CD4-positive, alpha-beta T cell (primary cell): ENCODE measurements at regions of chr14 and their contacts with region 1.

Region 1: GRCh38 chr14:22986508-22987054 is 4.2 kb upstream of the AJUBA start:
- DNase-seq: peak; percentile 81 to 96 (median 88)
- ATAC-seq: peak; percentile 67
- H3K4me3 ChIP-seq: no peak overlapping the region
- H3K4me3 Mint-ChIP-seq: peak overlapping the region; percentile 3
- H3K27ac ChIP-seq: no peak overlapping the region
- H3K27ac Mint-ChIP-seq: no peak overlapping the region
- H3K4me1 ChIP-seq: peaks cover 17% of the 10 kb centered on the region
- H3K4me1 Mint-ChIP-seq: peaks cover 3% of the 10 kb centered on the region
- H3K27me3 ChIP-seq: peaks cover 0 to 5% of the 10 kb centered on the region in 2 experiments
- H3K27me3 Mint-ChIP-seq: no peaks in the 10 kb centered on the region
- CTCF ChIP-seq: peak; percentile 95

Region 2: GRCh38 chr14:22761734-22762133 is 224.8 kb before region 1 on chr14:
- CTCF ChIA-PET with region 1: no interaction called
- POLR2A ChIA-PET with region 1: no interaction called
- intact Hi-C with region 1: no loop called
- DNase-seq: no peak
- ATAC-seq: no peak
- H3K4me3 ChIP-seq: no peak overlapping the region
- H3K4me3 Mint-ChIP-seq: no peak overlapping the region
- H3K27ac ChIP-seq: no peak overlapping the region
- H3K27ac Mint-ChIP-seq: no peak overlapping the region
- H3K4me1 ChIP-seq: peaks cover 10% of the 10 kb centered on the region
- H3K4me1 Mint-ChIP-seq: peaks cover 8% of the 10 kb centered on the region
- H3K27me3 ChIP-seq: no peaks in the 10 kb centered on the region
- H3K27me3 Mint-ChIP-seq: no peaks in the 10 kb centered on the region
- CTCF ChIP-seq: no peak

Region 3: GRCh38 chr14:22822571-22823098 is 163.9 kb before region 1 on chr14:
- CTCF ChIA-PET with region 1: interaction called, 5 read pairs
- POLR2A ChIA-PET with region 1: interaction called, 3 read pairs
- intact Hi-C with region 1: loop called (anchors 1 to 2 kb)
- DNase-seq: peak; percentile 46 to 85 (median 64)
- ATAC-seq: peak; percentile 84
- H3K4me3 ChIP-seq: peak overlapping the region; percentile 44
- H3K4me3 Mint-ChIP-seq: peak overlapping the region; percentile 2
- H3K27ac ChIP-seq: no peak overlapping the region
- H3K27ac Mint-ChIP-seq: no peak overlapping the region
- H3K4me1 ChIP-seq: peaks cover 18% of the 10 kb centered on the region
- H3K4me1 Mint-ChIP-seq: peaks cover 23% of the 10 kb centered on the region
- H3K27me3 ChIP-seq: peaks cover 0 to 5% of the 10 kb centered on the region in 2 experiments
- H3K27me3 Mint-ChIP-seq: peaks cover 10% of the 10 kb centered on the region
- CTCF ChIP-seq: peak; percentile 83

Region 4: DNA sequence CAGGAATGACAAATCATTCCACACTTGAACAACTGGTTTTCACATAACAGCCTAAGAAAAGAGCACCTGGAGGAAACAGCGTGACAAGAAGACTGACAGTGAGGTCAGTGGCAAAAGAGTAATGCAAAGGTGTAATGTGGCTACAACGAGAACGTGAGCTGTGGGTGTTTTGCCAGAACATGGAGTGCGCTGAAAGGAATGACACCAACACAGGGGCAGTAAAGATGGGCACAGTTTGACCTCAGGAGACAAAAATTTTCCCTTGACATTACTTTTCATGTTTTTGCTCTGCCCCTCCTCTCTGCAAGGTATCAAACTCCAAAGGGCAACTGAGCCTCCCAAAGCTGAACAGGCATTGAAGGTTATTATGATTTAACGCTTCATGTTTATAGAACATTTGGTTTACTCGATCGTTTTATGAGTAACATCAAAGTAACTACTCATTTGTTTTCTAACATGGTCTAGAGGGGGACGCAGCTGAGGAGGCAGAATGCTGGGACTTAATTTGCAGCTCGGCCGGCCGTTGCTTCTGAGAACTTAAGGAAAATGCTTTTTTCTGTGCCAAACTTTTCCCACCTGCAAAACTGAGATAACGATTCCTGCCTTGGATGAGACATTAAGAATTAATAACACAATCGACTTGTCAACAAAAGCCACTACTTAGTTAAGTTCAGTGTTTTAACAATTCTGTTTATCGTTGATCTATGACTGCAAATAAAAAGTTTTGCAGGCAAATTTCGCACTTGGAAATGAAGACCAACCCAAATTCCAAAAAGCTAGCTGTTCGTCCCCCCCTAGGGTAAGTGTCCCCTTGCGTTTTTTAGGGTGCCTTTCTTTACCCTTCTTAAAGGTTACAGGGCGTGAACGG is 30.6 kb before region 1 on chr14:
- CTCF ChIA-PET with region 1: interaction called, 15 read pairs
- POLR2A ChIA-PET with region 1: interaction called, 13 read pairs
- intact Hi-C with region 1: no loop called
- DNase-seq: no peak
- ATAC-seq: no peak
- H3K4me3 ChIP-seq: peak overlapping the region; percentile 89
- H3K4me3 Mint-ChIP-seq: peak overlapping the region; percentile 92
- H3K27ac ChIP-seq: peak overlapping the region; percentile 63 to 83
- H3K27ac Mint-ChIP-seq: peak overlapping the region; percentile 83
- H3K4me1 ChIP-seq: peaks cover 21% of the 10 kb centered on the region
- H3K4me1 Mint-ChIP-seq: peaks cover 18% of the 10 kb centered on the region
- H3K27me3 ChIP-seq: no peaks in the 10 kb centered on the region
- H3K27me3 Mint-ChIP-seq: no peaks in the 10 kb centered on the region
- CTCF ChIP-seq: no peak

Region 5: DNA sequence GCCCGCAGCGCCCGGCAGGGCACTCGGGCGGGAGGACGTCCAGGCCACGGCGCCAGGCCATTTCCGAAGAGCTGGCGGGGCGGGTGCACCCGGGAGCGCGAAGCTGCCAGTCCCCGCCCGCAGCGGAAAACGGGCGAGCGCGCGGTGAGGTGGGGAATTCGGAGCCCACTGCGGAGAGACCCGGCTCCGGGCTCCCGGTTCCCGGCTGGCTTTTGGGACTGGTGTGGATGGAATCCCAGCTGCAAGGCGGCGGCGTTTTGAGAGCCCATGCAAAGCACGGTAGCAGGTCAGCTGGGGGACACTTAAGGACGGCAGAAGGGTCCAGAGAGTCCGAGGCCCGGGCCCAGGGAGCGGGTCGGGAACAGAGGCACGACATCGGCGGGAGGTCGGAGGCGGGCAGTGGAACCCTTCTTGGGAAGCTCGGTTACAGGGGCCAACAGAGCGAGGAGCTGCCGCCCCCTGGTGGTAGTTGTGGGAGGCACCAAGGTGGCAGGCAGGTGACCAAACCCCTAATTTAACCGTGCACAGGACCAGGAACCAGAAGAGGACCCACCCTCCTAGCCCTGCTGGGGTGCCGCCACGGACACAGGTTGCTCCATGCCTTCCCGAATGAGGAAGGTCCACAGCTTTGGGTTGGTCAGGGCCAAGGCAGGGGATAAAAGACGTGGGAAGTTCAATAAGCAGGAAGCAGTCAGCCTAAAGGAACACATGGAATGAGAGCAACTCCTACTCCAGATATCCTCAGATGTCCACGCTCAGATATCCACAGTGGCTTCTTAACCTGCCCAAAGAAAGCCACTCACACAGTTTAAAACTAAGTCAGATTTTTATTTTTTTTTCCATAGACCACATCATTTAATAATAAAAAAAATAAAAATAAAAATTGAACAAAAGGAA is 71.4 kb after region 1 on chr14:
- CTCF ChIA-PET with region 1: interaction called, 136 read pairs
- POLR2A ChIA-PET with region 1: interaction called, 42 read pairs
- intact Hi-C with region 1: loop called (anchors 1 kb)
- DNase-seq: peak; percentile 74 to 94 (median 86)
- ATAC-seq: peak; percentile 73
- H3K4me3 ChIP-seq: peak overlapping the region; percentile 75
- H3K4me3 Mint-ChIP-seq: peak overlapping the region; percentile 90
- H3K27ac ChIP-seq: no peak overlapping the region
- H3K27ac Mint-ChIP-seq: peak overlapping the region; percentile 63
- H3K4me1 ChIP-seq: peaks cover 24% of the 10 kb centered on the region
- H3K4me1 Mint-ChIP-seq: peaks cover 18% of the 10 kb centered on the region
- H3K27me3 ChIP-seq: no peaks in the 10 kb centered on the region
- H3K27me3 Mint-ChIP-seq: no peaks in the 10 kb centered on the region
- CTCF ChIP-seq: peak; percentile 91

Region 6: GRCh38 chr14:23186913-23187654 is 200.5 kb after region 1 on chr14:
- CTCF ChIA-PET with region 1: interaction called, 3 read pairs
- POLR2A ChIA-PET with region 1: no interaction called
- intact Hi-C with region 1: loop called (anchors 2 to 10 kb)
- DNase-seq: peak in 7 of 14 experiments; percentile 3 to 68 (median 37)
- ATAC-seq: peak; percentile 58
- H3K4me3 ChIP-seq: no peak overlapping the region
- H3K4me3 Mint-ChIP-seq: no peak overlapping the region
- H3K27ac ChIP-seq: no peak overlapping the region
- H3K27ac Mint-ChIP-seq: no peak overlapping the region
- H3K4me1 ChIP-seq: peaks cover 15% of the 10 kb centered on the region
- H3K4me1 Mint-ChIP-seq: no peaks in the 10 kb centered on the region
- H3K27me3 ChIP-seq: peaks cover 2 to 12% of the 10 kb centered on the region in 2 experiments
- H3K27me3 Mint-ChIP-seq: no peaks in the 10 kb centered on the region
- CTCF ChIP-seq: peak; percentile 71

Region 7: DNA sequence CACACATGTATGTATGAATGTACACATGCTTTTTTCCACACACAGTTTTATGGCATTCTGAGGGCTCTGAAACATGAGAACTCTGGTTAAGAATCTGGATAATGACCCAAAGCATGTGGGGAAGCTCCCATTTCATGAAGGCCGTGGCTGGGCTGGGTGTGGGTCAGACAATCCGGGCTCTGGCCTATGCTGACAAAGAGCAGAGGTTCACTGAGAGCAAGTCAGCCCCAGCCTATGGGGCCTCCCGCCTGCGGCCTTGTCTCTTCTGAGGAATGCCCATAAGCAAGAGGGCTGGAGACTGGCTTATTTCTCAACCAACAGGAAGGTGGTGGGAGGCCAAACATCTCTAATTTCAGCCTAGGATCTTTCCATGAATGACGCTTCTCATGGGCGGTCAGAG is 413.0 kb after region 1 on chr14:
- CTCF ChIA-PET with region 1: no interaction called
- POLR2A ChIA-PET with region 1: no interaction called
- intact Hi-C with region 1: no loop called
- DNase-seq: no peak
- ATAC-seq: no peak
- H3K4me3 ChIP-seq: no peak overlapping the region
- H3K4me3 Mint-ChIP-seq: no peak overlapping the region
- H3K27ac ChIP-seq: no peak overlapping the region
- H3K27ac Mint-ChIP-seq: no peak overlapping the region
- H3K4me1 ChIP-seq: no peaks in the 10 kb centered on the region
- H3K4me1 Mint-ChIP-seq: no peaks in the 10 kb centered on the region
- H3K27me3 ChIP-seq: peaks cover 2 to 4% of the 10 kb centered on the region in 2 experiments
- H3K27me3 Mint-ChIP-seq: peaks cover 19% of the 10 kb centered on the region
- CTCF ChIP-seq: no peak